PC-9 (cell line): ENCODE measurements at regions of chr9 and their contacts with region 1.

Region 1: GRCh38 chr9:21802195-21803000 is at the start of gene MTAP:
- DNase-seq: peak; percentile 81 to 84
- H3K4me3 ChIP-seq: peak within 1 kb of the TSS; percentile 87
- H3K27ac ChIP-seq: peak within 1 kb of the TSS; percentile 78
- H3K4me1 ChIP-seq: peaks cover 27% of the 10 kb centered on the region
- H3K27me3 ChIP-seq: no peaks in the 10 kb centered on the region
- CTCF ChIP-seq: no peak
- total RNA-seq, gene MTAP: 44.1 and 46.1 TPM in 2 replicates

Region 2: DNA sequence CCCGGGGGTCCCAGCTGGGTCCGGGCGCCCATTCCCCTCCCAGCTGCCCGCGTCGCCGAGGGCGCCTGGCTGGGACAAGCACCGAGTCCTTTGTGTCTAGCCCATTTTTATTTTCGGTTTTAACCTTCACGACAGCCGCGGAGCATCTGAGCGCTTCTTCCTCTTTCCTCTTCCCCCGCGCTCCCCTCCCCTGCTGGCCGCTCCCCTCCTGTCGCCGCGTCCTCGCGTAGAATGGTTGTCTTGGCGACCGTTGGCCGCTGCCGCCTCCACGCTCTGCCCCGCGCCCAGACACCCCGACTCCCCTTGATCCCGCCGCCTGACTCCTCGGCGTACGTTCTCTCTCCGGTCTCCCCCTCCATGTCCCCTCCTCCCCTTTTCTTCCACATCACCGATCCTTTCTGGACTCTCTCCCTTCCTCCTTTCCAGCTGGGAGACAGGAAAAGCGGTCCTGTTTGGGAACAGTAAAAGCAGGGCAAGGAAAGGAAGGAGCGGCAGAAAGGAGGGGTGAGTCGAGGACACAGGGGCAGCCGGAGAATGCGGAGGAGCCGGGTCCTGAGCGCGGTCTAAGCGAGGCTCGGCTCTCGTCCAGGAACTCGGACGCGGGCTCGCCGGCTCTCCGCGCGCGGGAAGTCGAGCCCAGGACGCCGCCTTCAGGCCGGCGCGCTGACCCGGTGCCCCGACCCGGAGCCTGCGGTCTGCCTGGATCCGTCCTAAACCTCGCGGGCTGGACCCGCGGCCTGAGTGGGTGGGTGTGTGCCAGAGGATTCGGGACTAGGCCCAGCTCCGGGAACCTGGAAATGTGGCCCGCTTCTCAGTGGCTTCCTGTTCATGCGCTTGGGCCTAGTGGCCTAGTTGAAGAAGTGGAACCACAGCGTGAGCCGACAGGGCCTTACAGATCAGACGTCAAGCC is 193.0 kb after region 1 on chr9:
- CTCF ChIA-PET with region 1: no interaction called
- POLR2A ChIA-PET with region 1: interaction called, 45 read pairs
- intact Hi-C with region 1: no loop called
- DNase-seq: peak; percentile 50 to 76
- H3K4me3 ChIP-seq: peak overlapping the region; percentile 98
- H3K27ac ChIP-seq: peak overlapping the region; percentile 69
- H3K4me1 ChIP-seq: peaks cover 26% of the 10 kb centered on the region; the same call in 1 of the 2 replicates
- H3K27me3 ChIP-seq: no peaks in the 10 kb centered on the region
- CTCF ChIP-seq: 0 out of 2 replicates have a peak, but pooled peaks have one; percentile 25